Activated naive CD4-positive, alpha-beta T cell treated with anti-CD3 and anti-CD28 coated beads, Interleukin-2, amount 10 ng/mL, durations not matched to agents 7 days and 5 days (primary cell): ENCODE measurements at regions of chr20 and their contacts with region 1.

Region 1: DNA sequence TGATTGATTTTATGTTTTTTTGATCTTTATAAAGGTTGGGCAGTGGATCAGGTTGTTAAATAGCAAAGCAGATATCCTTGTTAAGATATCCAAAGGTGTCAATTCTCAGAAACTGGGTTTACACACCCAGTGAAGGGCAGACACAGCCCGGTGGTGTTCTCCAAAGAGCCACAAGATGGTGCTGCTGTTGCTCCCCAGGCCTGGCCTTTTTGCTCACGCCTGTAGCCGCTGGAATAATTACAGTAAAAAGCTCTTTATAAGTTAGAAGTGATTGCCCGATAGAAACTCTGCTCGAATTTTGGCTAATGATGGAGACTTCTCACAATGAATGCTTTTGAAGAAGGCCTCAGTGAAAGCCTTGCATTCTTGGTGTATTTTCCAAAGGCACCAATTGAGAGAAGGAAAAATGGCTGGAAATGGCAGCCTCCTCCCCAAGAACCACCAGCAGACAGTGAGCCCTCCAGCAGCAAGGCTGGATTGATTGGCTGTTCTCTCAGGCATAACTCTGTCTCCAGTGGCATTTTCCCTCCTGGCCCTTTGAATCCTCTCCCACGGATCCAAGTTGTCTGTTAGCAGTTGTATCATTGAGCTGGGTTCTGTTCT is 120.5 kb upstream of the CHD6 start:
- DNase-seq: peak; percentile 59
- H3K4me3 Mint-ChIP-seq: no peak overlapping the region
- H3K27ac Mint-ChIP-seq: no peak overlapping the region
- H3K4me1 Mint-ChIP-seq: no peaks in the 10 kb centered on the region
- H3K27me3 Mint-ChIP-seq: peaks cover 3% of the 10 kb centered on the region

Region 2: GRCh38 chr20:41854765-41855164 is 116.1 kb after region 1 on chr20:
- CTCF ChIA-PET with region 1: no interaction called
- DNase-seq: no peak
- H3K4me3 Mint-ChIP-seq: no peak overlapping the region
- H3K27ac Mint-ChIP-seq: no peak overlapping the region
- H3K4me1 Mint-ChIP-seq: no peaks in the 10 kb centered on the region
- H3K27me3 Mint-ChIP-seq: no peaks in the 10 kb centered on the region

Region 3: GRCh38 chr20:43187476-43188233 is 1449.0 kb after region 1 on chr20:
- CTCF ChIA-PET with region 1: interaction called, 13 read pairs
- DNase-seq: peak; percentile 76
- H3K4me3 Mint-ChIP-seq: no peak overlapping the region
- H3K27ac Mint-ChIP-seq: no peak overlapping the region
- H3K4me1 Mint-ChIP-seq: peaks cover 2% of the 10 kb centered on the region
- H3K27me3 Mint-ChIP-seq: peaks cover 45% of the 10 kb centered on the region